ENCODE measurements at regions of chr13 and their contacts with region 1.

Region 1: DNA sequence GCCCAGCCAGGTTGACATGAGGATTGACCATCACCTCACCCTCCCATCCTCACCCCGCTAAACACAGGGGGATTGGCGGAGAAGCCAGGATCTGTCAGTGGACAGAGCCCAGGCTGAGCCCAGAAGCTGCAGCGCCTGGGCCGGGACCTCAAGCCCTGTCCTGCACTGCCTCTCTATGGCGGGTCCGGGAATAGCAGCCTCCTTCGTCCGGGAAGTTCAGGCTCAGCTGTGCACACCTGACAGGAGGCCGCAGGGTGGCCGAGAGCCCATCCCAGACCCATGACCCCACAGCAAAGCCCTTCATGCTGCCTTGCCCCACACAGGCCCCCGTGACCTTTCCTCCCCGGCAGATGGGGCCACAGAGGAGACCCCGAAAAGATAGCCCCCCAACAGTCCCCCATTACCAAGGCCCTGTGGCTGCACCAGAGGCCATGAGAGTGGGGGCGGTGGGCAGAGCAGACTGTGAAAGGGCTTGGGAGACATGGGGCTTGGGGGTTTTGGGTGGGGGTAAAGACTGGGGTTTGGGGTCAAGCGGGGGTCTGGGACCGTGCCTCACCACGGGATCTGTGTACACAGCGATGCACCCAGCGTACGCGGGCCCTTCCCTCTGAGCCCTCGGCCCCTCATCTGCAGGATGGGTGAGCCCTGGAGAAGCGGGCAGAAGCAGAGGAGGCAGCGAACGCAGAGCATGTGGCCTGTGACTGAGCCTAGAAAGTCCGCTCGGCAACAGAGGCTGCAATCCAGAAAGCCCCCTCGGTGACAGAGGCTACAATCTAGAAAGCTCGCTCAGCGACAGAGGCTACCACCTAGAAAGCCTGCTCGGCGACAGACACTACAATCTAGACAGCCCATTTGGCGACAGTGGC is 68.1 kb downstream of the SPACA7 start:
- DNase-seq: peak; percentile 76
- H3K4me3 ChIP-seq: no peak overlapping the region
- H3K27ac ChIP-seq: no peak overlapping the region
- H3K4me1 ChIP-seq: peaks cover 0 to 9% (median 2%) of the 10 kb centered on the region in 4 donors
- H3K27me3 ChIP-seq: peaks cover 15 to 71% (median 38%) of the 10 kb centered on the region in 3 donors
- CTCF ChIP-seq: peak; percentile 61 to 83 (median 76)
- EP300 ChIP-seq: no peak
- POLR2A ChIP-seq: no peak

Region 2: GRCh38 chr13:111474136-111475002 is 969.9 kb before region 1 on chr13:
- intact Hi-C with region 1: loop called (anchors 1 kb)
- DNase-seq: no peak
- H3K4me3 ChIP-seq: no peak overlapping the region
- H3K27ac ChIP-seq: no peak overlapping the region
- H3K4me1 ChIP-seq: no peaks in the 10 kb centered on the region
- H3K27me3 ChIP-seq: peaks cover 0 to 5% (median 0%) of the 10 kb centered on the region in 3 donors
- CTCF ChIP-seq: peak in 3 of 4 experiments; percentile 47 to 52 (median 47)
- EP300 ChIP-seq: no peak
- POLR2A ChIP-seq: no peak

Region 3: DNA sequence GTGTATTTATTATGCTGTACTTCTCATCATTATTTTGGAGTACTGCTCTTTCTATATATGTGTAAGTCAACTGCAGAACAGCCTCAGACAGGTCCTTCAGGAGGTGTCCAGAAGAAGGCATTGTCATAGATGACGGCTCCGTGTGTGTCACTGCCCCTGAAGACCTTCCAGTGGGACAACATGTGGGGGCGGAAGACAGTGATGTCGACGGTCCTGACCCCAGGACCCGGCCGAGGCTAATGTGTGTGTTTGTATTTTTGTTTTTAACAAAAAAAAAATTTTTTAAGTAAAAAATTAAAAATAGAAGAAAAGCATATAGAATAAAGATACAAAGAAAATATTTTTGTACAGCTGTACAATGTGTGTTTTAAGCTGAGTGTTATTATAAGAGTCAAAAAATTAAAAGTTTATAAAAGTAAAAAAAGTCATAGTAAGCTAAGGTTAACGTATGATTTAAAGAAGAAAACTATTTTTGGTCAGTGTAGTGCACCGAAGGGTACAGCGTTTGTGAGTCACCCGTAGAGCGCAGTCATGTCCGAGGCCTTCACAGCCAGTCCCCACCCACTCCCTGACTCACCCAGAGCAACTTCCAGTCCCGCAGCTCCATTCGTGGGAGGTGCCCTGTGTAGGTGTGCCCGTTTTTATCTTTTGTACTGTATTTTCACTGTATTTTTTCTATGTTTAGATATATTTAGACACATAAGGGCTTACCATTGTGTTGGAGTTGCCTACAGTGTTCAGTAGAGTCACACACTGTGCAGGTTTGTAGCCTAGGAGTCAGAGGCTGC is 110.3 kb before region 1 on chr13:
- intact Hi-C with region 1: no loop called
- DNase-seq: no peak
- H3K4me3 ChIP-seq: no peak overlapping the region
- H3K27ac ChIP-seq: no peak overlapping the region
- H3K4me1 ChIP-seq: peaks cover 0 to 9% (median 7%) of the 10 kb centered on the region in 4 donors
- H3K27me3 ChIP-seq: peaks cover 8 to 53% (median 29%) of the 10 kb centered on the region in 3 donors
- CTCF ChIP-seq: no peak
- EP300 ChIP-seq: no peak
- POLR2A ChIP-seq: no peak

Region 4: DNA sequence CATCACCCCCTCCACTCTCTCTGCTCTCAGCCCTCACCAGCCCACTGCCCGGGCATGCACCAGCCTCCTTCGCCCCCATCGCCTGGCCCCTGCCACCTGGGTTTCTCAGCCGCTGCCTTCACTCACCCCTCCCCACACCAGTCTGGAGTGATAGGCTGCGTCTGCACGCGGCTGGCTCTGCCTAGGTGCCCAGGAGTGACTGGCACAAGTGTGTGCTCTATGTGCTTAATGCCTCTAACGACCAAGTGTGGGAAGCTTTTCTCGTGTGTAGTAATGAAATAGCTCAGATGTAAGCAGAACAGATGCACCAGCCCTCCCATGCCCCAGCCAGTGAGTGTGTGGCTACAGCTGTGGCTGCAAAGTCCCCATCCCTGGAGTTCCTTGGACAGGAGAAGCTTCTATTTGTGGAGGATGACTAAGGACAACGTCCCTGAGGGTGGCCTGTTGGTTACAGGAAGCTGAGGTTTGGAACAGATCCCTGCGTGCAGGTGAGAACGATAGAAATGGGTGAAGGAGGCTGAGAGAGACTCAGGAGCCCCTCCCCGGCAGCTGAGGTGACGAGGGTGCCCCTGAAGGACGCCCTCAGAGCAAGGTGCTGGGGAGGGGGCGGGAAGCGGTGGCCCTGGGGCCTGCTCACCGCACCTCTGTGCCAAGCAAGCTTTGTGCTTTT is 281.3 kb after region 1 on chr13:
- intact Hi-C with region 1: no loop called
- DNase-seq: peak; percentile 48
- H3K4me3 ChIP-seq: no peak overlapping the region
- H3K27ac ChIP-seq: no peak overlapping the region
- H3K4me1 ChIP-seq: peaks cover 0 to 21% (median 2%) of the 10 kb centered on the region in 4 donors
- H3K27me3 ChIP-seq: no peaks in the 10 kb centered on the region
- CTCF ChIP-seq: no peak
- EP300 ChIP-seq: no peak
- POLR2A ChIP-seq: no peak